HEK293T (cell line): ENCODE measurements at regions of chr5 and their contacts with region 1.

Region 1: GRCh38 chr5:37735649-37736347 is 104.0 kb downstream of the GDNF start:
- DNase-seq: no peak

Region 2: GRCh38 chr5:37722236-37723146 is 13.3 kb before region 1 on chr5:
- CTCF ChIA-PET with region 1: interaction called, 30 read pairs
- POLR2A ChIA-PET with region 1: no interaction called
- DNase-seq: no peak

Region 3: GRCh38 chr5:38182991-38183390 is 447.2 kb after region 1 on chr5:
- CTCF ChIA-PET with region 1: no interaction called
- POLR2A ChIA-PET with region 1: no interaction called
- DNase-seq: no peak

Region 4: GRCh38 chr5:38414348-38414747 is 678.5 kb after region 1 on chr5:
- CTCF ChIA-PET with region 1: no interaction called
- POLR2A ChIA-PET with region 1: no interaction called
- DNase-seq: no peak